ENCODE measurements at regions of chr3 and their contacts with region 1.

Region 1: DNA sequence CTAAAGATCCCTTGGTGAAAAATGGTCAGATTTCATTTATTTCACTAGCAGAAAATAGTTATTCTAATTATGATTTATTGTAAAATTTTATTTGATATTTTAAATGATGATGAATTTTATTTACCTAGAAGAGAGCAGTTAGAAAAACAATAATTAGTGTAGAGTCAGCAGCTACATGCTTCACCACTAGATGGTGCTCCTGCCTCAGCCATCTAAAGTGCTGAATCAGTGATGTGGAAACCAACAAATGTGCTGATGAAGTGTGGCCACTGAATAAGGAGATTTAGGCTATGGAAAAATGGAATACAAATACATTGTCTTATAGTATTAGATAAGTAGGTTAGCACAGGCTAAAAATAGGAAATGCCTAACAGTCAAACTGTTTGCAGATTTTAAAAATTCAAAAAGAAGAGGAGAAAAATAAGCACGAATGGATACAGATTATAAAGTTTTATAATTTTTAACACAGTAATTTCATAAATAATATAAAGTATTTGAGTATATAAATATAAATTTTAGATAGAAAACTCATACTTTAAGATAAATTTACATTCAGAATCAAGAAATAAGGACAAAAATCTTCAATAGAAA is 109.8 kb downstream of the PPP2R3A start:
- DNase-seq: peak; percentile 72
- ATAC-seq: peak; percentile 52; the same call in 1 of the 2 replicates
- H3K4me3 Mint-ChIP-seq: no peak overlapping the region
- H3K27ac Mint-ChIP-seq: peak overlapping the region; percentile 90; the same call in 1 of the 2 replicates
- H3K4me1 Mint-ChIP-seq: peaks cover 5% of the 10 kb centered on the region
- H3K27me3 Mint-ChIP-seq: no peaks in the 10 kb centered on the region
- CTCF ChIP-seq: peak; percentile 79

Region 2: GRCh38 chr3:135905058-135905724 is 170.1 kb before region 1 on chr3:
- CTCF ChIA-PET with region 1: interaction called, 10 read pairs
- POLR2A ChIA-PET with region 1: no interaction called
- DNase-seq: no peak
- ATAC-seq: peak; percentile 82
- H3K4me3 Mint-ChIP-seq: no peak overlapping the region
- H3K27ac Mint-ChIP-seq: peak overlapping the region; percentile 29; the same call in 1 of the 2 replicates
- H3K4me1 Mint-ChIP-seq: peaks cover 17% of the 10 kb centered on the region
- H3K27me3 Mint-ChIP-seq: no peaks in the 10 kb centered on the region; the same call in 1 of the 2 replicates
- CTCF ChIP-seq: no peak

Region 3: DNA sequence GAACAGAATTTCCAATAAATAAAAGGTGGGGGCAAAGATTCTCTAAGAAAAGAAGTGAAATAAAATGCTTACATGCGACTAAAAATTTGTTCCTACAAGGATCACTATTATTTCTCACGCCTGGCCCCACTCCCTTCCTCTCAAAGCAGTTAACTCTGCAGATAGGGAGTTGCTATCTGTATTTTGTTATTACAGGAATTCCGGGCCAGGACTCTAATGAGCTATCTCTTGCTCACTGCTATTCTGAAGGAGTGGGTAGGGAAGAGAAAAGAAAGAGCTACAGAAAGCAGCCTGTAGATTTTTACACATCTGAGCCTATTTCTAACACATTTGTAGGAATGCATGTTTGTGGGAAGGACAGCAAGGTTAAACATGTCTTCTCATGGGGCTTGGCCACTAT is 315.3 kb after region 1 on chr3:
- CTCF ChIA-PET with region 1: interaction called, 15 read pairs
- POLR2A ChIA-PET with region 1: no interaction called
- DNase-seq: no peak
- ATAC-seq: no peak
- H3K4me3 Mint-ChIP-seq: no peak overlapping the region
- H3K27ac Mint-ChIP-seq: no peak overlapping the region
- H3K4me1 Mint-ChIP-seq: no peaks in the 10 kb centered on the region
- H3K27me3 Mint-ChIP-seq: no peaks in the 10 kb centered on the region
- CTCF ChIP-seq: no peak